ENCODE measurements at regions of chr18 and their contacts with region 1.

Region 1: DNA sequence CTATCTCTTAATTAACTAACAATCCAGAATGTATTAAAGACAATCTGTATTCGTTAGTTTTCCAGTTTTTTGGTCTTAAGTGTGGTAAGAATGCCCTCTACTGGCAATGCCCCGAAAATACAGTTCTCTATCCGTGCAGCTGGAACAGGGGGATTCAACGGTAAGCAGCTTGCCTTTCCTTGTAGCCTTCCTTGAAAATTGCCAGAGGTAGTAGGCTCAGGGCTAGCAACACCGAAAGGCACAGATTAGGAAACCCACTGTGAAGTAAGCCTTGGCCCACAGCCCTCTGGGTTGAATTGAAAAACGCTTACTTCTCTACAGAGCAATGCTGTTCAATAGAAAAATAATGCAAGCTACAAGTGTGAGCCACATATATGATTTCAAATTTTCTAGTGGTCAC is 17.1 kb upstream of the VPS4B start:
- DNase-seq: peak; percentile 16
- ATAC-seq: peak; percentile 79
- H3K4me3 Mint-ChIP-seq: no peak overlapping the region
- H3K27ac Mint-ChIP-seq: no peak overlapping the region
- H3K4me1 Mint-ChIP-seq: peaks cover 7% of the 10 kb centered on the region
- H3K27me3 Mint-ChIP-seq: peaks cover 7% of the 10 kb centered on the region
- CTCF ChIP-seq: peak; percentile 94

Region 2: DNA sequence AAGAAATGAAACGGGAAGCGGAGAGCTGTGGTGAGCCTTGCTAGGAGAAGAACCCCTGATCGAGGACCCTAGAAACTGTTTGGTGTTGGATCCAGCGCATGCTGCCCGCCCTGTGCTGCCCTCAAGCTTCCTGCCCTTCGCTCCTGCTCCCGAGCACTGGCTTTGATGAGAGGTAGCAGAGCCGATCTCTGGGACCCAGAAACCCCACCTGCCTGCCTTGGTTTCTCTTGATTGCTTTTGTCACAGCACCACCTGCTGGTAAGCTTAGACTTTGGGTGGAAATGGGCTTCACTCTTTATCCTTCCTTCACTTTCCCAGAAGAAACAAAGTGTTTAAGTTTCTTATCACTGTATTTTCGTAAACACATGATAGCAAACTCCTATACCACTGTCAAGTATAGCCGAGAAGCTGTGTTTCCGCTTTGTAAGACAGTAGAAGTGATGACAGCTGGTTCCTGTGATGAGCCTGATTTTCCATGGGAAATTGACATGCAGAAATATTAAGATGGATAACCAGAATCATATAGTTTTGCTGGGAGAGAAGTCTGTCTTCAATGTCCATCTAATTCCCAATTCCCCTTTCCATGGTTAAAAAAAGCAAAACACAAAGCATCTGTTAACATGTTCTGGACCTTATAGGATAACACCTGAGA is 456.6 kb before region 1 on chr18:
- CTCF ChIA-PET with region 1: interaction called, 5 read pairs
- POLR2A ChIA-PET with region 1: no interaction called
- intact Hi-C with region 1: loop called (anchors 1 kb)
- DNase-seq: peak; percentile 29
- ATAC-seq: peak; percentile 58
- H3K4me3 Mint-ChIP-seq: no peak overlapping the region
- H3K27ac Mint-ChIP-seq: no peak overlapping the region
- H3K4me1 Mint-ChIP-seq: peaks cover 6% of the 10 kb centered on the region
- H3K27me3 Mint-ChIP-seq: no peaks in the 10 kb centered on the region
- CTCF ChIP-seq: peak; percentile 60

Region 3: GRCh38 chr18:63119647-63120046 is 319.7 kb before region 1 on chr18:
- CTCF ChIA-PET with region 1: interaction called, 5 read pairs
- POLR2A ChIA-PET with region 1: no interaction called
- intact Hi-C with region 1: loop called (anchors 5 kb)
- DNase-seq: no peak
- ATAC-seq: no peak
- H3K4me3 Mint-ChIP-seq: no peak overlapping the region
- H3K27ac Mint-ChIP-seq: no peak overlapping the region
- H3K4me1 Mint-ChIP-seq: peaks cover 5% of the 10 kb centered on the region
- H3K27me3 Mint-ChIP-seq: peaks cover 2% of the 10 kb centered on the region
- CTCF ChIP-seq: no peak

Region 4: DNA sequence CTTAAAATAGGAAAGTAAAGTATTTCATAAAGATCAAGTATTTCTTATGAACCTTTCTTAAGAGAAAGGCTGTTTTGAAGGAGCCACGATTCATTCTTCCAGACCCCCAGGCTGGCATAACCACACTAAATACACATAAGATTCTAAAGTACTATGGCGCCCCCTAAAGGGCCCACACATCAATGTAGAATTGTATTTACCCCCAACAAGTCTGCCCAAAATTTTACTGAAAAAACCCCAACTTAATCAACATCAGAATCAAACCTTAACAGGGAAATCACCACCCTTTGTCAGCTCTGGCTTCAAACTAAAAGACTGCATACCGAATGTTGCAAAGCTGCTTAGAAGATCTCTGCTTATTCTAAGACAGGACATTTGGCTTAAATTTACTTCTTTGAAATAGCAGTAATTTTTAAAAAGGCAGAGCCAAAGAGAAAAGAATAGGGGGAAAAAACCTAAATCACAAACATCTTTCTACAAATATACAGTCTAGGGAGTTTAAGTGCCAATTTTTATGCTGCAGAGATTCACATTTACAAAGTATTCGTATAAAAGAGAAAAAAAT is 99.3 kb before region 1 on chr18:
- CTCF ChIA-PET with region 1: interaction called, 33 read pairs
- POLR2A ChIA-PET with region 1: no interaction called
- intact Hi-C with region 1: loop called (anchors 1 kb)
- DNase-seq: no peak
- ATAC-seq: peak; percentile 45
- H3K4me3 Mint-ChIP-seq: no peak overlapping the region
- H3K27ac Mint-ChIP-seq: no peak overlapping the region
- H3K4me1 Mint-ChIP-seq: no peaks in the 10 kb centered on the region
- H3K27me3 Mint-ChIP-seq: no peaks in the 10 kb centered on the region
- CTCF ChIP-seq: no peak

Region 5: DNA sequence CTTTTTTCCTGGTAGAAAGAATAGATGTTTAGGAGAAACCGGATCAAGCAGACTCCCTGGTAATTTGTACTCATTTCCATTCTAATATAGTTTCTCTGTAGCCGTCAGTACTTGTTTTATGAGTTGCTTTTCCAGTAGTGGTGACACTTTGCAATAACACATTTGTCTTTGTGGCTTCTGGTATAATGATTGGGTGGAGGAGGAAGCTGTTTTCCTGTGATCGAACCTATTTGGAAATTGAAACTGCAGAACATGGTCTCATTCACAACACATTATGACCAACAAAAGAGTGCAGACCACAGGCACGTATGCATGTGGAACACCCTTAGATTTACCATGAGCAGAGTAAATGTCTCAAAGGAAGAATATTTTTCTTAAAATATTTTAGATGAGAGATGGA is 95.3 kb after region 1 on chr18:
- CTCF ChIA-PET with region 1: no interaction called
- POLR2A ChIA-PET with region 1: no interaction called
- intact Hi-C with region 1: no loop called
- DNase-seq: no peak
- ATAC-seq: no peak
- H3K4me3 Mint-ChIP-seq: no peak overlapping the region
- H3K27ac Mint-ChIP-seq: no peak overlapping the region
- H3K4me1 Mint-ChIP-seq: no peaks in the 10 kb centered on the region
- H3K27me3 Mint-ChIP-seq: peaks cover 10% of the 10 kb centered on the region
- CTCF ChIP-seq: no peak

Region 6: DNA sequence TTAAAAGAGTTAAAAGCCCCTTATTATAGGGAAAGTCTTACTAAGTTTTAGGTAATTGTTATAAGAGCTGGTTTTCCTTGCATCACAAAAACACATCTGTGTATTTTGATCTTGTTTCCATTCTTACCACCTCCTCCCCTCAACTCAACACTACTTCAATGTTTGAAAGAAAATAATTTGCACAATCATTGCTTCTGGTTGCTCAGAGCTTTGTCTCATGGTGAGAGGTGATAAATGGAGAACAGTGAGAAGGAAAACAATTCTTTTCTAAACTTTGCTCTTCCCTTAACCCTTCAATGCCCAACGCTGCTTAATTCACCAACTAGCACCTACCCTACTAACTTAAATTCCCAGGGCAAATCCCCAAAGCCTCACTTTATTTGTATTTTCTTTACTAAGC is 977.7 kb after region 1 on chr18:
- CTCF ChIA-PET with region 1: no interaction called
- POLR2A ChIA-PET with region 1: no interaction called
- intact Hi-C with region 1: no loop called
- DNase-seq: no peak
- ATAC-seq: no peak
- H3K4me3 Mint-ChIP-seq: no peak overlapping the region
- H3K27ac Mint-ChIP-seq: no peak overlapping the region
- H3K4me1 Mint-ChIP-seq: peaks cover 2% of the 10 kb centered on the region
- H3K27me3 Mint-ChIP-seq: no peaks in the 10 kb centered on the region
- CTCF ChIP-seq: no peak

Measured in activated B cell treated with CpG ODN at 0.5 μM for 24 hours (primary cell).